ENCODE measurements at regions of chr12 and their contacts with region 1.

Region 1: DNA sequence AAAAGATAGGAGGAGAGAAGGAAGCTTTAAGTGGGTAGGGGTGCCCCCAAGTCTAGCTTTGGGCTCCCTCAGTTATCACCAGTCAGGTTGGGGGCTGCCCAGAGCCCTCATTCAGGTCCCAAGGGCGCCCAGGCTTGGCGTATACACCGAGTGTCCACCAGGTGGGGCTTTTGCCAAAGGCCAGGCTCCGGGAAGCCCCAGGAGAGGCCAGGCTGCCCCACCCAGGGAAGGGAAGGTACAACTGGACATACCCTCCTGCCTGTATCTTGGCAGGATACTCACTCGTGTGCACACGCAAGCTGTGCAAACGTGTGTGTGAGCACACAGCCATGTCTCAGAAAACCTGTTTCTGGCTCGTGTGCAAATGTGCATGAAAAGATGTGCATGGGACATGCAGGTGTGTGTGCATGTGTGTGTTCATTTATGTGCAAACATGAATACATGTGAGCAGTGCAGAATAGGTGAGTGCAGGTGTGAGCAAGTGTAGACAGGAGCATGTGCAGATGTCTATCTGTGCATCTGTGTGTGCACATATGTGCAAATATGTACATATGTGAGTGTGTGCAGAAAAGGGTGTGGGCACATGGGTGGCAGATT is 103.9 kb upstream of the MYL2 start:
- DNase-seq: peak; percentile 82
- H3K4me3 ChIP-seq: no peak overlapping the region
- H3K27ac ChIP-seq: no peak overlapping the region
- H3K4me1 ChIP-seq: peaks cover 0 to 15% (median 2%) of the 10 kb centered on the region in 6 donors
- H3K27me3 ChIP-seq: peaks cover 0 to 93% (median 0%) of the 10 kb centered on the region in 7 donors
- CTCF ChIP-seq: peak; percentile 38 to 87 (median 69)
- POLR2A ChIP-seq: no peak

Region 2: DNA sequence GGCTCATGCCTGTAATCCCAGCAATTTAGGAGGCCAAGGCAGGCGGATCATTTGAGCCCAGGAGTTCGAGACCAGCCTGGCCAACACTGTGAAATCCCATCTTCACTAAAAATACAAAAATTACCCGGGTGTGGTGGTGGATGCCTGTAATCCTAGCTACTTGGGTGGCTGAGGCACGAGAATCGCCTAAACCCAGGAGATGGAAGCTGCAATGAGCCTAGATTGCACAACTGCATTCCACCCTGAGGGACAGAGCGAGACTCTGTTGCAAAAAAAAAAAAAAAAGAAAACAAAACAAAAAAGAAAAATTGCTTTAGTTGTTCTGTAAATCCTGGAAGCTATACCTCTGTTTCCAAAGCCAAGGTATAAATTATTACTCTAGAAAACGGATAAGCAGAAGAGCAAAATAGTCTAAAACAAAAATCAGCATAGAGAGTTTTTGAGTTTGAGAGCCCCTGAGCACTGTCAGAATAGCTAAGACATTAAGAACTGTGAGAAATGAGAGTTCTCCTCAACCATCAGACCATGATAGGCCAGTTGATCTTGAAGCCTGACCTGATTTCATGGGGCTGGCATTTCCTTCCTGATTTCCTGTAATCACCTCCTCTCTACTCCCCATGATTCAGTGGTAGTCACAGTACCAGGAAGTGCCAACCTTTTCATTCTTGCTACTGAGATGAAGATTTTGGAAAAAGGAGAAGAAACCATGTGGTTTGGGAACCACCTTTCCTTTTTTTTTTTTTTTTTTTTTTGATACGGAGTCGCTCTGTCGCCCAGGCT is 711.5 kb before region 1 on chr12:
- intact Hi-C with region 1: no loop called
- DNase-seq: no peak
- H3K4me3 ChIP-seq: no peak overlapping the region
- H3K27ac ChIP-seq: peak overlapping the region in 5 of 8 donors; percentile 6 to 52 (median 31)
- H3K4me1 ChIP-seq: peaks cover 11 to 81% (median 49%) of the 10 kb centered on the region in 6 donors
- H3K27me3 ChIP-seq: no peaks in the 10 kb centered on the region
- CTCF ChIP-seq: no peak
- POLR2A ChIP-seq: no peak

Region 3: GRCh38 chr12:111174251-111174960 is 150.1 kb after region 1 on chr12:
- intact Hi-C with region 1: loop called (anchors 10 kb)
- DNase-seq: no peak
- H3K4me3 ChIP-seq: no peak overlapping the region
- H3K27ac ChIP-seq: no peak overlapping the region
- H3K4me1 ChIP-seq: peaks cover 0 to 51% (median 21%) of the 10 kb centered on the region in 6 donors
- H3K27me3 ChIP-seq: peaks cover 0 to 44% (median 0%) of the 10 kb centered on the region in 7 donors
- CTCF ChIP-seq: peak in 2 of 11 experiments; percentile 27 to 35
- POLR2A ChIP-seq: no peak

Measured in spleen (tissue), 13 donors.